IMR-90 (cell line): ENCODE measurements at regions of chr1 and their contacts with region 1.

Region 1: DNA sequence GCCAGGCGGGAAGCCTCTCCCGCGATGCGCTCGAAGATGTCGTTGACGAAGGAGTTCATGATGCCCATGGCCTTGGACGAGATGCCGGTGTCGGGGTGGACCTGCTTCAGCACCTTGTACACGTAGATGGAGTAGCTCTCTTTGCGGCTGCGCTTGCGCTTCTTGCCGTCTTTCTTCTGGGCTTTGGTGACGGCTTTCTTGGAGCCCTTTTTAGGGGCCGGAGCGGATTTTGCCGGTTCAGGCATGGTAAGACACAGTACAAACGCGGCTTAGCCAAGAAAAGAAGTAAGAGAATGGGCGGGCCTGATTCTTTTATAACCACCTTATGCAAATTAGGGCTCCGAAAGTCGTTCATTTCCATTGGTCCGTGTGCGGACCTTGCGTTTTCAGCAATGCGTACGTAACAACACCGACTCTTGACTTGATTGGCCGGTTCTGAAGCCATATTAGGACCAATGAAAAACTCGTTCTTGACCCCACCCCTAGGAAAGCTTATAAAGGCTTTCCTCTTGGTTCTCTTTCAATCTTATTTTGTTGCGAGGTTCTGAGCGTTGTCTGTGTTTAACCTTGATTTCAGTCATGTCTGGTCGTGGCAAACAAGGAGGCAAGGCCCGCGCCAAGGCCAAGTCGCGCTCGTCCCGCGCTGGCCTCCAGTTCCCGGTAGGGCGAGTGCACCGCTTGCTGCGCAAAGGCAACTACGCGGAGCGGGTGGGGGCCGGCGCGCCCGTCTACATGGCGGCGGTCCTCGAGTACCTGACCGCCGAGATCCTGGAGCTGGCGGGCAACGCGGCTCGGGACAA is 12.8 kb upstream of the BOLA1 start:
- DNase-seq: peak; percentile 100
- ATAC-seq: peak; percentile 76
- H3K4me3 ChIP-seq: peak overlapping the region; percentile 50
- H3K27ac ChIP-seq: peak overlapping the region; percentile 91
- H3K4me1 ChIP-seq: peaks cover 3% of the 10 kb centered on the region; the same call in 1 of the 2 replicates
- H3K27me3 ChIP-seq: no peaks in the 10 kb centered on the region
- CTCF ChIP-seq: no peak
- POLR2A ChIP-seq: peak; percentile 97
- RAD21 ChIP-seq: no peak

Region 2: DNA sequence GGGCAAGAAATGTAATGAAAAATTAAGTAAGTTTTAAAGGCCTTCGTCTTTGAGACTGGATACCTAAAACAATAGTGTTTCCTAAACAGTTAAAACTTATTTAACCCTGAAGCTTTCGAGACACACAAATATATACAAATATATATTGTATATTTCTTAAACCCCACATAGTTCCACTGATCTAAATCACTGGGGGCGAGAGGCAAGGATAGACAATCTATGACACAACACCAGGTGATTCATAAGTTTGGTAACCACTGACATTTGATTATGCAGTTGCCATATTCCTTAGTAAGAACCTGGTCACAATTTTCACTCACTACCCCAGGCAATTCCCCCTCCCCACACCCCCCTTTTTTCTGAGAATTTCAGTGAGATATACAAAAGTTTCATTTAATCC is 42.5 kb before region 1 on chr1:
- CTCF ChIA-PET with region 1: no interaction called
- POLR2A ChIA-PET with region 1: interaction called, 16 read pairs
- dilution Hi-C with region 1: no loop called
- in situ Hi-C with region 1: no loop called
- intact Hi-C with region 1: no loop called
- DNase-seq: peak; percentile 78
- ATAC-seq: no peak
- H3K4me3 ChIP-seq: peak overlapping the region; percentile 97
- H3K27ac ChIP-seq: no peak overlapping the region
- H3K4me1 ChIP-seq: peaks cover 6% of the 10 kb centered on the region
- H3K27me3 ChIP-seq: no peaks in the 10 kb centered on the region
- CTCF ChIP-seq: no peak
- POLR2A ChIP-seq: no peak
- RAD21 ChIP-seq: no peak

Region 3: DNA sequence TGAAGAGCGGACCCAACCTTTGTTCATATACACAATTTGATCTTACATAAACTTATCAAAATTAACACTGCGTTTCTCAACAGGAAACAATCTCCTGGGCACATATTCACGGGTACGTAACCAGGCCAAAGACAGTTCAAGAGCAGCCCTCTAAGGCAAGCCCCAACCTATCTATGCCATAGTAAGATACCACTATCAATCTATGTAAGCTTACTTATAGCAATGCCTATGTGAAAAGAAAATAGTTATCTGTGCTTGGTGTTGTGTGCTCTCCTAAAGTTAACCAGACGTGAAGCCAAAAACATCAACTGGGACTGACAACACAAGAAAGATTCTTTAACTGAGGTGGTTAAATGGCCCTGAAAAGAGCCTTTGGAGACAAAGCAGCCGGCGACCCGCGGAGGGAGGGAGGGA is 36.6 kb before region 1 on chr1:
- CTCF ChIA-PET with region 1: no interaction called
- POLR2A ChIA-PET with region 1: interaction called, 16 read pairs
- dilution Hi-C with region 1: no loop called
- in situ Hi-C with region 1: no loop called
- intact Hi-C with region 1: no loop called
- DNase-seq: no peak
- ATAC-seq: no peak
- H3K4me3 ChIP-seq: peak overlapping the region; percentile 97
- H3K27ac ChIP-seq: peak overlapping the region; percentile 97
- H3K4me1 ChIP-seq: peaks cover 10% of the 10 kb centered on the region
- H3K27me3 ChIP-seq: no peaks in the 10 kb centered on the region
- CTCF ChIP-seq: no peak
- POLR2A ChIP-seq: no peak
- RAD21 ChIP-seq: no peak

Region 4: GRCh38 chr1:149937060-149937705 is 50.6 kb after region 1 on chr1:
- CTCF ChIA-PET with region 1: no interaction called
- POLR2A ChIA-PET with region 1: no interaction called
- dilution Hi-C with region 1: no loop called
- in situ Hi-C with region 1: no loop called
- intact Hi-C with region 1: loop called (anchors 5 kb)
- DNase-seq: peak; percentile 58
- ATAC-seq: peak; percentile 22
- H3K4me3 ChIP-seq: peak overlapping the region; percentile 84
- H3K27ac ChIP-seq: peak overlapping the region; percentile 33; the same call in 1 of the 2 replicates
- H3K4me1 ChIP-seq: peaks cover 11% of the 10 kb centered on the region
- H3K27me3 ChIP-seq: no peaks in the 10 kb centered on the region
- CTCF ChIP-seq: peak; percentile 24; the same call in 1 of the 2 replicates
- POLR2A ChIP-seq: no peak
- RAD21 ChIP-seq: no peak